ENCODE measurements at regions of chrX and their contacts with region 1.

Region 1: DNA sequence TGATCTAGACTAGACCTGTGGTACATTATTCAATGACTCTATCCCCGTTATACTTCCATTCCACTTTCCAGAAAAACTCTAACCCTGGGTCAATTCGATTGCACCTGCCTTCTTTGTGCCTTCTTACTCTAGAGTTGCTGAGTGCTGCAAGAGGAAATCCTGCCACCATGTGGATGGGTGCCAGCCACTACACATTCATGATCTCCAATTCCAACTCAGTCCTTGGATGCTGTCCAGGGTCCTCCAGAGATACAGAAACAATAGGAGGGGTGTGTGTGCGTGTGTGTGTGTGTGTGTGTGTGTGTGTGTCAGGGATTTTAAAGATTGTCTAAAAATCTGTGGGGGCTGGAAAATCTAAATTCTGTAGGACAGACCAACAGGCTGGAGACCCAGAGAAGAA is 42.9 kb upstream of the INTS6L start:
- DNase-seq: peak in 8 of 9 donors; percentile 13 to 58 (median 37)
- ATAC-seq: peak; percentile 72
- H3K4me3 ChIP-seq: no peak overlapping the region
- H3K4me3 Mint-ChIP-seq: no peak overlapping the region
- H3K27ac ChIP-seq: no peak overlapping the region
- H3K27ac Mint-ChIP-seq: no peak overlapping the region
- H3K4me1 ChIP-seq: no peaks in the 10 kb centered on the region
- H3K4me1 Mint-ChIP-seq: peaks cover 0 to 9% (median 0%) of the 10 kb centered on the region in 7 donors
- H3K27me3 ChIP-seq: no peaks in the 10 kb centered on the region
- H3K27me3 Mint-ChIP-seq: peaks cover 0 to 16% (median 4%) of the 10 kb centered on the region in 5 donors

Region 2: DNA sequence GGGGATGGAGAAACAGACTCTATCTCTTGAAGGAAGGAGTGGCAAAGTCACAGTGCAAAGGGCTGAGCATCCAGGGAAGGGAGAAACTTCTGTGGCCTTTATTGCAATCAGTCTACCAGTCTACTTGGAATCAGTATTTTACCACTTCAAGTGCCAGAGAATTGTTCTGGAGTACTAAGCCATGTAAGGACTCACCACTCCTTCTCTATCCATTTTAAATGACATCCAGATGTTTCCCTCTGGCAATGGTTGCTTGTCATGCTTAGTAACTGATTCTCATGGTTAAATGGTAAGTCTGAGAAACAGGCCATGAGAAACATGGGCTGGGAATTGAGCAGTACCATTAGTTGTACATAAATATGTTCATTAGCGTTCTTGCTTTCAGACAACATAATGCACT is 507.9 kb before region 1 on chrX:
- CTCF ChIA-PET with region 1: no interaction called
- POLR2A ChIA-PET with region 1: no interaction called
- intact Hi-C with region 1: loop called (anchors 1 kb)
- DNase-seq: no peak
- ATAC-seq: no peak
- H3K4me3 ChIP-seq: no peak overlapping the region
- H3K4me3 Mint-ChIP-seq: no peak overlapping the region
- H3K27ac ChIP-seq: no peak overlapping the region
- H3K27ac Mint-ChIP-seq: no peak overlapping the region
- H3K4me1 ChIP-seq: no peaks in the 10 kb centered on the region
- H3K4me1 Mint-ChIP-seq: peaks cover 0 to 1% (median 0%) of the 10 kb centered on the region in 7 donors
- H3K27me3 ChIP-seq: no peaks in the 10 kb centered on the region
- H3K27me3 Mint-ChIP-seq: no peaks in the 10 kb centered on the region

Region 3: DNA sequence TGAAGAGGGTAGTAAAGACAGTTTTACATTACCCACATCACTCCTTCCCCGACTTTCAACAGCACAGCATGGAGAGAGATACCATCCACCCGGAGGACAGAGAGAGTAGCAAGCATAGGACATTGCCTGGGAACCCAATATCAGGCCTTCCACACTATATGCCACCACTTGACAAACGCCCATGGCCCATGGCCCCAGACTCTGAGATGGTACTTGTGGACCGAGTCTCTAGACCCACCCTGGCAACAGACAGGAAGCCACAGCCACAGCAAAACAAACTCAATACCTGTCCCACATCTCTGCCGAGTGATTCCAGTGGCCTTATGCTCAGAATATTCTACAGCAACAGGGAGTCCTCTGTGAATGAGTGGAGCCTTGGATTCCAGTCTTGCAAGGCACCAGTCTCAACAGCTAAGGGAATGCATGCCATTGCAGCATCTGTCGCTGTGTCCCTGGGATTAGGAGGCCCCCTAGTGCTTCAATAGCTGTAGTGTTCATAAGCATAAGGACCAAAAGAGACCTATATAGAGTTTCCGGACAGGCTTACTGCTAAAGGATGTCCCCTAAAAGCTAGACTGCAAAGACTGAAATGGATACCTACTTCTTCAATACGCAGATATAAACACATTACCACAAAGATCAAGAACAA is 291.7 kb before region 1 on chrX:
- CTCF ChIA-PET with region 1: no interaction called
- POLR2A ChIA-PET with region 1: no interaction called
- intact Hi-C with region 1: loop called in 1 of 2 experiments (anchors 1 kb)
- DNase-seq: peak in 7 of 9 donors; percentile 2 to 44 (median 15)
- ATAC-seq: peak; percentile 81
- H3K4me3 ChIP-seq: no peak overlapping the region
- H3K4me3 Mint-ChIP-seq: no peak overlapping the region
- H3K27ac ChIP-seq: no peak overlapping the region
- H3K27ac Mint-ChIP-seq: no peak overlapping the region
- H3K4me1 ChIP-seq: no peaks in the 10 kb centered on the region
- H3K4me1 Mint-ChIP-seq: peaks cover 0 to 10% (median 0%) of the 10 kb centered on the region in 7 donors
- H3K27me3 ChIP-seq: no peaks in the 10 kb centered on the region
- H3K27me3 Mint-ChIP-seq: peaks cover 15 to 63% (median 23%) of the 10 kb centered on the region in 5 donors

Region 4: GRCh38 chrX:135295238-135295943 is 182.2 kb before region 1 on chrX:
- CTCF ChIA-PET with region 1: no interaction called
- POLR2A ChIA-PET with region 1: no interaction called
- intact Hi-C with region 1: loop called in 1 of 2 experiments (anchors 1 kb)
- DNase-seq: peak; percentile 26 to 69 (median 58)
- ATAC-seq: peak; percentile 98
- H3K4me3 ChIP-seq: peak overlapping the region; percentile 63
- H3K4me3 Mint-ChIP-seq: peak overlapping the region; percentile 85 to 95 (median 92)
- H3K27ac ChIP-seq: peak overlapping the region; percentile 67
- H3K27ac Mint-ChIP-seq: peak overlapping the region; percentile 76 to 94 (median 90)
- H3K4me1 ChIP-seq: peaks cover 5 to 9% of the 10 kb centered on the region in 2 donors
- H3K4me1 Mint-ChIP-seq: peaks cover 0 to 32% (median 23%) of the 10 kb centered on the region in 7 donors
- H3K27me3 ChIP-seq: no peaks in the 10 kb centered on the region
- H3K27me3 Mint-ChIP-seq: no peaks in the 10 kb centered on the region

Region 5: GRCh38 chrX:135384161-135384836 is 93.3 kb before region 1 on chrX:
- CTCF ChIA-PET with region 1: no interaction called
- POLR2A ChIA-PET with region 1: no interaction called
- intact Hi-C with region 1: loop called in 1 of 2 experiments (anchors 2 kb)
- DNase-seq: peak in 8 of 9 donors; percentile 35 to 70 (median 56)
- ATAC-seq: peak; percentile 97
- H3K4me3 ChIP-seq: peak overlapping the region; percentile 35
- H3K4me3 Mint-ChIP-seq: peak overlapping the region; percentile 46 to 78 (median 64)
- H3K27ac ChIP-seq: no peak overlapping the region
- H3K27ac Mint-ChIP-seq: peak overlapping the region; percentile 17 to 92 (median 72)
- H3K4me1 ChIP-seq: peaks cover 30 to 40% of the 10 kb centered on the region in 2 donors
- H3K4me1 Mint-ChIP-seq: peaks cover 17 to 50% (median 44%) of the 10 kb centered on the region in 7 donors
- H3K27me3 ChIP-seq: no peaks in the 10 kb centered on the region
- H3K27me3 Mint-ChIP-seq: no peaks in the 10 kb centered on the region

Measured in naive thymus-derived CD4-positive, alpha-beta T cell (primary cell).